Caco-2 (cell line): ENCODE measurements at regions of chr17 and their contacts with region 1.

Region 1: GRCh38 chr17:35764123-35764991 is 3.7 kb downstream of the C17orf50 start:
- DNase-seq: peak; percentile 92 to 98
- H3K4me3 ChIP-seq: peak overlapping the region; percentile 65
- H3K4me3 Mint-ChIP-seq: peak overlapping the region; percentile 76
- H3K27ac Mint-ChIP-seq: peak overlapping the region; percentile 75
- H3K4me1 ChIP-seq: peaks cover 15% of the 10 kb centered on the region
- H3K4me1 Mint-ChIP-seq: peaks cover 9% of the 10 kb centered on the region
- H3K27me3 ChIP-seq: no peaks in the 10 kb centered on the region
- H3K27me3 Mint-ChIP-seq: no peaks in the 10 kb centered on the region
- CTCF ChIP-seq: peak; percentile 89 to 97

Region 2: GRCh38 chr17:35612924-35613521 is 151.3 kb before region 1 on chr17:
- CTCF ChIA-PET with region 1: interaction called, 12 read pairs
- POLR2A ChIA-PET with region 1: no interaction called
- intact Hi-C with region 1: no loop called
- DNase-seq: peak in 1 of 2 experiments; percentile 67
- H3K4me3 ChIP-seq: no peak overlapping the region
- H3K4me3 Mint-ChIP-seq: no peak overlapping the region
- H3K27ac Mint-ChIP-seq: no peak overlapping the region
- H3K4me1 ChIP-seq: no peaks in the 10 kb centered on the region; the same call in 1 of the 2 replicates
- H3K4me1 Mint-ChIP-seq: no peaks in the 10 kb centered on the region
- H3K27me3 ChIP-seq: no peaks in the 10 kb centered on the region
- H3K27me3 Mint-ChIP-seq: no peaks in the 10 kb centered on the region
- CTCF ChIP-seq: peak; percentile 78 to 79

Region 3: DNA sequence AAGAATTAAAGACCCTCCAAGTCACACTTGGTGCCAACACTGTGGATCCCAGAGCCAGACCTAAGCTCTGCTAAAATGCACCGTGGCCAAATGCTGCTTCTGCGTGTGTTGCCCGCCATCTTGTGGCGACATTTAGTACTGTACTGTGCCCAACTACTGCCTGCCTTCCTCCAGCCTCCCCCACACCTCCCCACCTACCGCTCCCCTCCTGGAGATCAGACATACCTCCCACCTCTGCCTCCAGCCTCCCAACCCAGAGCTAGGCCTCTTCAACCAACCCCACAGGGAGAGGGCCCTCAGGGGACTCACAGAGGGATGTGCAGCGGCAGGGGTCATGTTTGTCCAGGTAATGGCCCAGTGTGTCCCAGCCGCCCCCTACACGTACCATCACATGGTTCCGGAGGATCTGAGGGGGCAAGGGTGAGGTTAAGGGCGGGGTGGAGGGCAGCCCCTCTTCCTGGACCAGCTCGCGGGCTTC is 16.8 kb before region 1 on chr17:
- CTCF ChIA-PET with region 1: interaction called, 26 read pairs
- POLR2A ChIA-PET with region 1: no interaction called
- intact Hi-C with region 1: no loop called
- DNase-seq: peak; percentile 72 to 83
- H3K4me3 ChIP-seq: no peak overlapping the region
- H3K4me3 Mint-ChIP-seq: no peak overlapping the region
- H3K27ac Mint-ChIP-seq: no peak overlapping the region
- H3K4me1 ChIP-seq: peaks cover 4% of the 10 kb centered on the region; the same call in 1 of the 2 replicates
- H3K4me1 Mint-ChIP-seq: no peaks in the 10 kb centered on the region
- H3K27me3 ChIP-seq: no peaks in the 10 kb centered on the region
- H3K27me3 Mint-ChIP-seq: peaks cover 9% of the 10 kb centered on the region
- CTCF ChIP-seq: peak; percentile 89 to 91

Region 4: GRCh38 chr17:35794988-35795824 is 30.8 kb after region 1 on chr17 and contains the start of gene MMP28:
- CTCF ChIA-PET with region 1: interaction called, 16 read pairs
- POLR2A ChIA-PET with region 1: interaction called, 3 read pairs
- intact Hi-C with region 1: no loop called
- DNase-seq: peak in 1 of 2 experiments; percentile 54
- H3K4me3 ChIP-seq: peak within 1 kb of the TSS; percentile 44
- H3K4me3 Mint-ChIP-seq: peak within 1 kb of the TSS; percentile 76
- H3K27ac Mint-ChIP-seq: no peak within 1 kb of the TSS
- H3K4me1 ChIP-seq: no peaks in the 10 kb centered on the region
- H3K4me1 Mint-ChIP-seq: no peaks in the 10 kb centered on the region
- H3K27me3 ChIP-seq: peaks cover 8% of the 10 kb centered on the region
- H3K27me3 Mint-ChIP-seq: peaks cover 38% of the 10 kb centered on the region
- CTCF ChIP-seq: no peak
- total RNA-seq, gene MMP28: not detected in 2 replicates

Region 5: GRCh38 chr17:35816723-35817122 is 52.4 kb after region 1 on chr17:
- CTCF ChIA-PET with region 1: interaction called, 14 read pairs
- POLR2A ChIA-PET with region 1: no interaction called
- intact Hi-C with region 1: no loop called
- DNase-seq: no peak
- H3K4me3 ChIP-seq: no peak overlapping the region
- H3K4me3 Mint-ChIP-seq: no peak overlapping the region
- H3K27ac Mint-ChIP-seq: no peak overlapping the region
- H3K4me1 ChIP-seq: no peaks in the 10 kb centered on the region
- H3K4me1 Mint-ChIP-seq: no peaks in the 10 kb centered on the region
- H3K27me3 ChIP-seq: no peaks in the 10 kb centered on the region
- H3K27me3 Mint-ChIP-seq: no peaks in the 10 kb centered on the region
- CTCF ChIP-seq: no peak